ENCODE measurements at regions of chr7 and their contacts with region 1.

Region 1: GRCh38 chr7:99408379-99409191 is at the starts of genes BUD31 and PDAP1:
- DNase-seq: peak; percentile 93
- ATAC-seq: peak; percentile 82
- H3K4me3 Mint-ChIP-seq: peak within 1 kb of the TSS; percentile 92
- H3K27ac Mint-ChIP-seq: peak within 1 kb of the TSS; percentile 89
- H3K4me1 Mint-ChIP-seq: peaks cover 32% of the 10 kb centered on the region
- H3K27me3 Mint-ChIP-seq: no peaks in the 10 kb centered on the region
- total RNA-seq, gene BUD31: 80.8 to 90.4 TPM
- total RNA-seq, gene PDAP1: 87.1 to 93.5 TPM

Region 2: DNA sequence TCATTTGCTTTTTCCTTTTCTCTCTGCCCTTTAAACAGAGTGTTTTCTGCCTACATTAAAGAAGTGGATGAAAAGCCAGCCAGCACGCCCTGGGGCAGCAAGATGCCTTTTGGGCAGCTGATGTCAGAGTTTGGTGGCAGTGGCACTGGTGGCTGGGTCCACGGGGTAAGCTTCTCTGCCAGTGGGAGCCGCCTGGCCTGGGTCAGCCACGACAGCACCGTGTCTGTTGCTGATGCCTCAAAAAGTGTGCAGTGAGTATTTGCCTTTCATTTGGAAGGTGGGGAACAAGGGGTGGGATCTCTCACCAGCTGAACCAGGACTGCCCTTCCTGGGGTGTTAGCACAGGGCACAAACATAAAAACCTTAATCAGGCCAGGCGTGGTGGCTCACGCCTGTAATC is 54.7 kb before region 1 on chr7:
- POLR2A ChIA-PET with region 1: no interaction called
- DNase-seq: no peak
- ATAC-seq: no peak
- H3K4me3 Mint-ChIP-seq: no peak overlapping the region
- H3K27ac Mint-ChIP-seq: no peak overlapping the region
- H3K4me1 Mint-ChIP-seq: peaks cover 1% of the 10 kb centered on the region
- H3K27me3 Mint-ChIP-seq: no peaks in the 10 kb centered on the region

Region 3: GRCh38 chr7:99380032-99380822 is 28.4 kb before region 1 on chr7:
- POLR2A ChIA-PET with region 1: interaction called, 35 read pairs
- DNase-seq: no peak
- ATAC-seq: peak; percentile 9
- H3K4me3 Mint-ChIP-seq: peak overlapping the region; percentile 85
- H3K27ac Mint-ChIP-seq: peak overlapping the region; percentile 96
- H3K4me1 Mint-ChIP-seq: peaks cover 42% of the 10 kb centered on the region
- H3K27me3 Mint-ChIP-seq: no peaks in the 10 kb centered on the region

Region 4: GRCh38 chr7:99419323-99420021 is 10.9 kb after region 1 on chr7:
- POLR2A ChIA-PET with region 1: interaction called, 10 read pairs
- DNase-seq: no peak
- ATAC-seq: no peak
- H3K4me3 Mint-ChIP-seq: no peak overlapping the region
- H3K27ac Mint-ChIP-seq: no peak overlapping the region
- H3K4me1 Mint-ChIP-seq: peaks cover 4% of the 10 kb centered on the region
- H3K27me3 Mint-ChIP-seq: no peaks in the 10 kb centered on the region

Region 5: DNA sequence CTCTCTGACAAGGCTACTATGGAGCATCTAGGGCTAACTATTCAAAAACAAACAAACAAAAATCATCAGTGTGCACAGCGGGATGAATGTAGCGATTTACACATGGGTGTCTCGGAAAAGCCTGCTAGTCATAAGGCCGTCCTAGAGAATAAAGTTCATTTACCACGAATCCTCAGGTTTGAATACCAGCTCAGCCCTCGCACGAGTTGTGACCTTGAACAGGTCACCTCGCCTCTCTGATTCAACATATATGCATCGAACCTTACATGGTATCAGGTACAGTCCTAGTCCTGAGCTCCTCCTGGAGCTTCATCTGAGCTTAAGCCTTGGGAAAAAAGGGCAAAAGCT is 56.8 kb after region 1 on chr7:
- POLR2A ChIA-PET with region 1: interaction called, 12 read pairs
- DNase-seq: no peak
- ATAC-seq: peak; percentile 8
- H3K4me3 Mint-ChIP-seq: peak overlapping the region; percentile 89
- H3K27ac Mint-ChIP-seq: peak overlapping the region; percentile 92
- H3K4me1 Mint-ChIP-seq: peaks cover 22% of the 10 kb centered on the region
- H3K27me3 Mint-ChIP-seq: no peaks in the 10 kb centered on the region

Region 6: GRCh38 chr7:99558306-99559174 is 150.0 kb after region 1 on chr7 and contains the start of gene ZNF655:
- POLR2A ChIA-PET with region 1: interaction called, 11 read pairs
- DNase-seq: peak; percentile 93
- ATAC-seq: peak; percentile 86
- H3K4me3 Mint-ChIP-seq: peak within 1 kb of the TSS; percentile 100
- H3K27ac Mint-ChIP-seq: peak within 1 kb of the TSS; percentile 100
- H3K4me1 Mint-ChIP-seq: peaks cover 39% of the 10 kb centered on the region
- H3K27me3 Mint-ChIP-seq: no peaks in the 10 kb centered on the region
- total RNA-seq, gene ZNF655: 133 to 134 TPM

Region 7: DNA sequence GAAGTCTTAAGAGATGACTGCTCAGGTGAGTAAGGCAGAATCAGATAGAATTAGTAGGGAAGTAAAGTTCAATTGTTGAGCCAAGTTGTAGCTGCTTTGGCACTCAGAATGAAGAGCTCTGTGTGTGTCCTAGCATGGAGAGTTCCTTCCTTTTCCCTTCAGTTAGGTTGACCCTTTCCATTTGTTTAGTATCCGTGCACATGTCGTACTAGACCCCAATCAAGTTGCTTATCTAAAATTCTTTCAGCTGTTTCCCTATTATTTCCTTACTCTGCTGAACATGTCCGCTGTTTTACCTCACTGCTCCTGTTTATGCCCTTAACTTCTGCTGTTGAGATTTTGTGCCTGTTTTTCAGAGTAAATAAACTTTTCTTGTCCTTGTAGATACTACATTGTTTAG is 163.2 kb after region 1 on chr7:
- POLR2A ChIA-PET with region 1: no interaction called
- DNase-seq: no peak
- ATAC-seq: no peak
- H3K4me3 Mint-ChIP-seq: no peak overlapping the region
- H3K27ac Mint-ChIP-seq: no peak overlapping the region
- H3K4me1 Mint-ChIP-seq: no peaks in the 10 kb centered on the region
- H3K27me3 Mint-ChIP-seq: no peaks in the 10 kb centered on the region